ENCODE measurements at regions of chr2 and their contacts with region 1.

Region 1: GRCh38 chr2:34012715-34013302 is 413.7 kb upstream of the FAM98A start:
- DNase-seq: peak; percentile 35 to 87 (median 80)
- H3K4me3 ChIP-seq: no peak overlapping the region
- H3K27ac ChIP-seq: peak overlapping the region in 31 of 59 donors; percentile 9 to 77 (median 42)
- H3K27me3 ChIP-seq: no peaks in the 10 kb centered on the region
- CTCF ChIP-seq: peak in 55 of 56 donors; percentile 44 to 93 (median 77)

Region 2: GRCh38 chr2:33913071-33913616 is 99.7 kb before region 1 on chr2:
- intact Hi-C with region 1: no loop called
- DNase-seq: no peak
- H3K4me3 ChIP-seq: no peak overlapping the region
- H3K27ac ChIP-seq: no peak overlapping the region
- H3K27me3 ChIP-seq: no peaks in the 10 kb centered on the region
- CTCF ChIP-seq: no peak

Region 3: GRCh38 chr2:34096562-34097171 is 83.9 kb after region 1 on chr2:
- intact Hi-C with region 1: loop called in 1 of 2 experiments (anchors 2 kb)
- DNase-seq: peak in 5 of 10 donors; percentile 39 to 79 (median 43)
- H3K4me3 ChIP-seq: no peak overlapping the region
- H3K27ac ChIP-seq: peak overlapping the region in 51 of 59 donors; percentile 4 to 88 (median 69)
- H3K27me3 ChIP-seq: no peaks in the 10 kb centered on the region
- CTCF ChIP-seq: peak; percentile 74 to 94 (median 88)

Region 4: GRCh38 chr2:34570266-34570872 is 557.6 kb after region 1 on chr2:
- intact Hi-C with region 1: loop called in 1 of 2 experiments (anchors 5 kb)
- DNase-seq: no peak
- H3K4me3 ChIP-seq: no peak overlapping the region
- H3K27ac ChIP-seq: no peak overlapping the region
- H3K27me3 ChIP-seq: no peaks in the 10 kb centered on the region
- CTCF ChIP-seq: peak in 51 of 56 donors; percentile 16 to 68 (median 43)

Region 5: GRCh38 chr2:35410431-35411061 is 1397.7 kb after region 1 on chr2:
- intact Hi-C with region 1: loop called in 1 of 2 experiments (anchors 5 kb)
- DNase-seq: peak in 8 of 10 donors; percentile 48 to 77 (median 56)
- H3K4me3 ChIP-seq: no peak overlapping the region
- H3K27ac ChIP-seq: no peak overlapping the region
- H3K27me3 ChIP-seq: no peaks in the 10 kb centered on the region
- CTCF ChIP-seq: peak; percentile 74 to 98 (median 89)